ENCODE measurements at regions of chr7 and their contacts with region 1.

Region 1: DNA sequence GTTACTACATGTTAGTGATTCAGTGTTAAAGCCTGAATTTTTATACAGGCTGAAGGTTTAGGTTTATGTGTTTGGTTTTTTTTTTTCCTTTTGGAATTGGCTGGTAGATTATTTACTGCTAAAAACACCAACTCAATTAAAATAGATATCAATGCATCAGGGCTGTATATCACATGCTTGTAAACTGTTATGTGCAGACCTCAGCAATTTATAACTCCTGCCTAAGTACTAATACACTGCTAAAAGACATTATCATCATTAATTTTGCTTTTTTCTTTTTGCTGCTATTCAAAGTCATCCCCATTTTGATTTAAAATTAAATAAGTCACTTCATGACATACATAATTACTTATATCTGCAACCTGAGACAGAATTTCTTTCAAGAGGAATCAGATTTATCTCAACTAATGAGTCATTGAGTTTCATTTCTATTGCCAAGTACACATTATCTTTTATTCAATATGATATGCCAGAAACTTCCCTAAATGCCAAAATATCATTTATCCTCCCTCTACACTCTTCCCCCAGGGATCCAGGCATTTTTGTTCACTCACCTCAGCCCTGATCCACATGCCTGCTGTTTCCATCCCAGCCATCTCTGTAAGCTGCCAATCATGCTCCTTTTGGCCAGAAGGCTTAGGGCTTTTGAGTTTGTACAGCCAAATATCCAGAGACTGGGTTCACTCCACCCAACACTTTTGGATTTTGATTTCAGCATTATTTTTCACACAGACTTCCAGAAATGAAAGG is 98.5 kb downstream of the POLR1F start:
- DNase-seq: no peak
- H3K4me3 ChIP-seq: no peak overlapping the region
- H3K27ac ChIP-seq: no peak overlapping the region
- H3K4me1 ChIP-seq: no peaks in the 10 kb centered on the region
- H3K27me3 ChIP-seq: no peaks in the 10 kb centered on the region
- CTCF ChIP-seq: no peak
- POLR2A ChIP-seq: no peak

Region 2: DNA sequence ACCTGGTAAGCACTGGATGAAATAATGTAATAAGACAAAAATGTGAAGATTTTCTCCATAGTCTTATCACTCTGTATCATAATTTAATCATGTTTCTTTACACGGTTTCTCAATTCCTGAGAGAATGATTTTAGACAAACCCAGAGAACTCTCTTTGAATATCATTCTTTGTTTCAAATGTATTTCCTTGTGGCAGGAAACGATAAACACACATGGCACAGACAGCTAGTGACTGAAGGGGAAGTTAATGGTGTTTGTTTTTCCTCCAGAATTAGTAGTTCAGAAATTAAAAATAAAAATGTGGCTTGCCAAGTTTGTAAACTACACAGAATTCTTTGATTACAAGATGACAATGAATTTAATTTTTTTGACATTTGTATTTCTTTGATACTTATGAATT is 1419.0 kb before region 1 on chr7:
- intact Hi-C with region 1: loop called (anchors 10 kb)
- DNase-seq: no peak
- H3K4me3 ChIP-seq: no peak overlapping the region
- H3K27ac ChIP-seq: no peak overlapping the region
- H3K4me1 ChIP-seq: no peaks in the 10 kb centered on the region
- H3K27me3 ChIP-seq: no peaks in the 10 kb centered on the region
- CTCF ChIP-seq: no peak
- POLR2A ChIP-seq: no peak

Region 3: DNA sequence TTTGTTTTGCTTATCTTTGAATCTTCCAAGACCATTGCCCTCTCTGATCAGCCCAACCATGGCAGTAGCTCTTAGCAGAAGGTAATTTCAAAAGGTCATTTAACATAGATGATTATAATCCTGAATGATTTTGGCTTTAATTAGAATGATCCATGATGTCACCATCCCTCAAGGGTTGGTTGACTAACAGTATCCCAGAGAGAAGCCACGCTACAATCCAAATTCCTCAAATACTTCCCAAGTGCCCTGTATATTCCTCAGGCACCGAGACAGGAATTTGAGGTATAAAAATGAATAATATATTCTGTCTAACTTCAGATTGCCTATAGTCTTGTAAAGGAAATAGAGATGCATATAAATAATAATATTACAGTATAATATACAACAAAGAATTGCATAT is 205.2 kb after region 1 on chr7:
- intact Hi-C with region 1: no loop called
- DNase-seq: no peak
- H3K4me3 ChIP-seq: no peak overlapping the region
- H3K27ac ChIP-seq: no peak overlapping the region
- H3K4me1 ChIP-seq: no peaks in the 10 kb centered on the region
- H3K27me3 ChIP-seq: no peaks in the 10 kb centered on the region
- CTCF ChIP-seq: no peak
- POLR2A ChIP-seq: no peak

Region 4: DNA sequence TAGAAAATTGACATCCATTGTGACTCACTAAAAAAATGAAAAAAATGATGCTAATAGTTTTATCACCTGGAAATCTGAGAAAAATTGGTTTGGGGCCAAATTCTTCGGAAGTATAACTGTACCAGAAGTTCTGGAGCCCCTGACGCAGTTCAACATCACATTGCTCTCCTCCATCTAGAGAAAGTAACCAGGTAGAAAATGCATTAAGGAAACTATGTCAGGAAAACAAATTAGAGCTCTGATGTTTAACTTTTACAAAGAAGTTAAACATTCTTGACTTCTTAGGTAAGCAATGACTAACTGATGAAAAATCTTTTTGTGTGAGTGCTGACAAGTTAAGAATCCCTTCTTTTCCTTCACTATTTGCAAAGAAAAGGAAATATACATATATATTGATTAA is 224.2 kb after region 1 on chr7:
- intact Hi-C with region 1: no loop called
- DNase-seq: no peak
- H3K4me3 ChIP-seq: no peak overlapping the region
- H3K27ac ChIP-seq: no peak overlapping the region
- H3K4me1 ChIP-seq: no peaks in the 10 kb centered on the region
- H3K27me3 ChIP-seq: no peaks in the 10 kb centered on the region
- CTCF ChIP-seq: no peak
- POLR2A ChIP-seq: no peak

Measured in vagina (tissue), 2 donors.